AG04450 (cell line): ENCODE measurements at regions of chr19 and their contacts with region 1.

Region 1: GRCh38 chr19:57406516-57407123 is 4.3 kb upstream of the ZNF17 start:
- DNase-seq: peak; percentile 15
- H3K4me3 ChIP-seq: no peak overlapping the region
- H3K27ac ChIP-seq: no peak overlapping the region
- H3K27me3 ChIP-seq: no peaks in the 10 kb centered on the region
- CTCF ChIP-seq: peak; percentile 86

Region 2: GRCh38 chr19:57389730-57390598 is 16.7 kb before region 1 on chr19 and contains the start of gene ZNF548:
- CTCF ChIA-PET with region 1: interaction called, 10 read pairs
- POLR2A ChIA-PET with region 1: no interaction called
- DNase-seq: peak; percentile 99
- H3K4me3 ChIP-seq: peak within 1 kb of the TSS; percentile 93
- H3K27ac ChIP-seq: peak within 1 kb of the TSS; percentile 98
- H3K27me3 ChIP-seq: no peaks in the 10 kb centered on the region
- CTCF ChIP-seq: peak; percentile 31
- polyA plus RNA-seq, gene ZNF548: 12.7 and 14.2 TPM in 2 replicates

Region 3: GRCh38 chr19:57914531-57914930 is 507.9 kb after region 1 on chr19:
- CTCF ChIA-PET with region 1: no interaction called
- POLR2A ChIA-PET with region 1: interaction called, 11 read pairs
- DNase-seq: no peak
- H3K4me3 ChIP-seq: no peak overlapping the region
- H3K27ac ChIP-seq: no peak overlapping the region
- H3K27me3 ChIP-seq: no peaks in the 10 kb centered on the region
- CTCF ChIP-seq: no peak